Posterior vena cava (tissue), 2 donors: ENCODE measurements at regions of chr1 and their contacts with region 1.

Region 1: GRCh38 chr1:236239092-236239585 is 42.6 kb downstream of the ERO1B start:
- DNase-seq: no peak

Region 2: GRCh38 chr1:234271243-234271606 is 1967.9 kb before region 1 on chr1:
- intact Hi-C with region 1: no loop called
- DNase-seq: no peak

Region 3: DNA sequence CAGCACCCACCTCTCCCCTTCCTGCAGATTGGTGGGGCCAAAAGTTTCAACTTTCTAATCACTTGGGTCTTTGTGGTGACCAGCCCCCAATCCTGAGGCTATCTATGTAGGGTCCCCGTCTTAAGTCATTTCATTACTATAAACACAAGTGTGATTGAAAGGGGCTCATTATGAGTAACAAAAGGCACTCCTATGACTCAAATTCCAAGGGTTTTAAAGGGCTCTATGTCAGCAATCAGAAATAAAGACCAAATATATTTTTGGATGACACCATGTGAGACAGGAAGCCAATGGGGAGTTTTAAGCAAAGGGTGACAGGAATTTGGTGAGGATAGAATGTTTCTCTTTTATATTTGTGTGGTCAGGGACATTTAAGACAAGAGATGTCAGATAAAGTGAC is 36.4 kb after region 1 on chr1:
- intact Hi-C with region 1: no loop called
- DNase-seq: no peak

Region 4: DNA sequence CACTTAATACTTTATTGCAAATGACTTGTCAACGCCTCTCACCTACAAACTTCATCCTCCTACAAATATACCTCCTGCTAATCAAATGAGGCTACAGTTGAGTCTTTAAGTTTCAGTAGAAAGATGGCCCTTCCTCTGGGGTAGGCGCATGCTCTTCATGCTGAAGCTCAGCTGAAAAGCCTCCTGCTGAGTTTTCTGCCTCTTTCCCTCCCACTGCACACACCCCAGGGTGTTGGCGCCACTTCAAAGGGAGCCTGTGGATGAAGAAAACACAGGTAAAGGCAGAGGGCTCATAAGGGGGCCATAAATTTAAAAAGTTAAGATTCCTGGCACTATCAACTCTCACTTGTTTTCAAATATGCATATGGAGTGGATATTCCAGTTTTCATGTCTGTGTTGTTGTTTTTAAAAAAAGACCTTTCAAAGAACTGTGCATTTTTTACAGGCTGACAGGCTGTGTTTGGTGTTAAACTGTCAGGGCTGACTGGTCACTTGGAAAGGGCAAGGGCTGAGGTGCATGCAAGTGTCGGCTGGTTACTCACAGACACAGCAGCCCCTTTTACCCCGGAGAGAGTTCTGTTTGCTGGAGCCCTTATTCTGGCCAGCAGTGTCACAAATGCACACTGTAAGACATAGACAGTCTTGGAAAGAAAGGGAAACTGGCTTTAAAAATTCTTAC is 241.8 kb after region 1 on chr1:
- intact Hi-C with region 1: loop called in 1 of 2 experiments (anchors 5 kb)
- DNase-seq: no peak